PC-3 (cell line): ENCODE measurements at regions of chr17 and their contacts with region 1.

Region 1: DNA sequence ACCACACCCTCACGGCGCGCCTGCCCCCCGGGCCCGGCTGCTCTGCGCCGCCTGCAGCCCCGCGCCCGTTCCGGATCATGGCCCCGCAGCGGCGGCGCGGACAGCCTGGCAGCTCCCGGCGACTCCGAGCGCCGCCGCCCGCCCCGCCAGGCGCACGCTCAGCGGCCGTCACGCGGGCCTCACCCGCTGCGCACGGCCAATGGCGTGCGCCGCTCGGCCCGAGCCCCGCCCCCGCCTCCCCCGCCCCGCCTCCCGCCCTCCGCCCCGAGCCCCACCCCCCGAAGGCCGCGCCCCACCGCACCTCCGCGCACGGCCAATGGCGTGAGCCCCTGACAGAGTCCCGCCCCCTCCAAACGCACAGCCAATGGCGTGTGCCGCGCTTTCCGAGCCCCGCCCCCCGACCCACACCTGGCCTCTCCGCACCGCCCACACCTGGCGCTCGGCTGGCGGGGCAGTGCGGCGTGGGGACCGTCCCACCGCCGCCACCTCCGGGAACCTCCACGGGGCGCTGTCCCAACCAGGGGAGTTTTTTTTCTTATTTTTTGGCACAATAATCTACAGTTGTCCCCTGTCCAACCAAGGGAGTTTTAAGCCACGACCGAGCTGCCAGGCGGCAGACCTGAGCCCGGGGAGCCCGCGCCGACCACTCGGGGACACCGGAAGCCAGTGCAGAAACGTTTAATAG is at the start of gene PCYT2:
- DNase-seq: peak; percentile 90
- ATAC-seq: peak; percentile 75
- H3K4me3 ChIP-seq: peak within 1 kb of the TSS; percentile 85
- H3K27ac ChIP-seq: peak within 1 kb of the TSS; percentile 45; the same call in 1 of the 2 replicates
- H3K4me1 ChIP-seq: peaks cover 36% of the 10 kb centered on the region
- H3K27me3 ChIP-seq: no peaks in the 10 kb centered on the region
- CTCF ChIP-seq: peak; percentile 34; the same call in 1 of the 2 replicates
- total RNA-seq, gene PCYT2: 33.3 and 42.7 TPM in 2 replicates

Region 2: DNA sequence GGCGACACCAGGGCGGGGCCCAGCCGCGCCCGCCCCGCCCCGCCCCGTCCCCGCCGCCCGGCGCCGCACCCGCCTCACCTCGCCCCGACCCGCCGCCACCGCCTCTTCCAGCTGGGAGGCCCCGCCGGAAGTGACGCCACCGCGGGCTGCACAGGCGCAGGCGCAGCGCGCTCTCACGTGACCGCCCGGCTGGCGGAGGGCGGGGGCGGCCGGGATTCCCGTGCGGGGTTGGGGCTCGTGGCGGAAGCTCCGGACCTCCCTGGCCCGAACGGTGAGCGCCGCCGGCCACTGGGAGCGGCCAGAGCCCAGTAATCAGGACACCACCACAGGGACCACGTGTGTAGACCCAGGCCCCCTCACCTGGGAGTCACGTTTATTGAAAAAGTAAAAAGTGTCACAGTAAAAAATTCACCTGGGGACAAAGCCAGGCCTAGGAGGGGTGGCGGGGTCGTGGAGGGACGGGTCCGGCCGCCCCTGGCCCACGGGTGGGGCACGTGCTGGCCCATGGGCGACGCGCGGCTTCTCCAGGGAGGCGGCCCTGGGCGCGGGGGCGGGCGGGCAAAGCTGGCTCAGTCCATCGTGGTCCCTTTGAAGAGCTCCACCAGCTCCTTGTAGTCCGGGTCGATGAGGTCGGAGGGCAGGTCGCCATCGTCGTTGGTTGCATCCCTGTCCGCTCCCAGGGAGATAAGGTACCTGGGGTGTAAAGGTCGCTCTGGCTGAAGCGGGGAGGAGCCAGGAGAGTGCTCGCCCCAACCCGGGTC is 78.1 kb before region 1 on chr17 and contains the start of gene MCRIP1:
- CTCF ChIA-PET with region 1: no interaction called
- POLR2A ChIA-PET with region 1: no interaction called
- intact Hi-C with region 1: no loop called
- DNase-seq: peak; percentile 96
- ATAC-seq: peak; percentile 79
- H3K4me3 ChIP-seq: peak within 1 kb of the TSS; percentile 83
- H3K27ac ChIP-seq: peak within 1 kb of the TSS; percentile 81
- H3K4me1 ChIP-seq: peaks cover 21% of the 10 kb centered on the region
- H3K27me3 ChIP-seq: no peaks in the 10 kb centered on the region
- CTCF ChIP-seq: no peak
- total RNA-seq, gene MCRIP1: 73.4 and 90.9 TPM in 2 replicates

Region 3: GRCh38 chr17:81890447-81891299 is 20.7 kb before region 1 on chr17:
- CTCF ChIA-PET with region 1: no interaction called
- POLR2A ChIA-PET with region 1: interaction called, 4 read pairs
- intact Hi-C with region 1: loop called (anchors 1 kb)
- DNase-seq: no peak
- ATAC-seq: no peak
- H3K4me3 ChIP-seq: peak overlapping the region; percentile 99
- H3K27ac ChIP-seq: peak overlapping the region; percentile 58
- H3K4me1 ChIP-seq: peaks cover 40% of the 10 kb centered on the region
- H3K27me3 ChIP-seq: no peaks in the 10 kb centered on the region
- CTCF ChIP-seq: no peak

Region 4: DNA sequence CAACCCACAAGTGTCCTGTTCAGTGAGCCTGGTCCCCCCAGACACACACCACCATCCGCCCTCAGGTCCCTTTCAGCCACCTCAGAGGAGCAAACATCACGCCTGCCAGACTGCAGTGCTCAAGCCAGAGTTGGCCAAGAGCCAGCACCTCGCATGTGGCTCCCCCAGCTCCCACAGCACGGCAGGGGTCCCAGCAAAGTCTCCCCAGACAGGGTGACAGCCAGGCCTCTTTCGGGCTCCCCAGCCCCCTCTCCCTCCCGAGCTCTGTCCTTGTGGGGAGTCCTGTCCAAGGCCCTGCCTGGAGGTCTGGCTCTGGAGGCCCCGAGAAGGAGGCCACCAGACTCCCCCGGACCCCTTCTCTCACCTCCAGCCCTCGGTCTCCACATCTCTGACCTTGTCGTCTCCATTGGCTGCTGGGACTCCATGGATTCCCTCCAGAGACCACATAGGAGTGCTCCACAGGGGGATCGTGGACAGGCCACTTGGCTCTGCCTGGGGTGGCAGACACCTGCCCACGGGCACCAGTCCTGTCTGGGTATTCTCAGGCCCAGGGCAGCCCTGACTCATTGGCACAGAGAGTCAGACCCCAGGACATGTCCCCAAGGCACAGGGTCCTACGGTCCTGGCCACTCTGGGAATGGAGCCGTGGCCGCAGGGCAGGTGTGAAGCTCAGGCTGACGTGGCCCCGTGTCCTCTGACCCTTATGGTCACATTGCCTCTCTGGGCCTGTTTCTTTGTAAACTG is 37.4 kb after region 1 on chr17:
- CTCF ChIA-PET with region 1: no interaction called
- POLR2A ChIA-PET with region 1: no interaction called
- intact Hi-C with region 1: no loop called
- DNase-seq: no peak
- ATAC-seq: no peak
- H3K4me3 ChIP-seq: no peak overlapping the region
- H3K27ac ChIP-seq: no peak overlapping the region
- H3K4me1 ChIP-seq: no peaks in the 10 kb centered on the region
- H3K27me3 ChIP-seq: no peaks in the 10 kb centered on the region
- CTCF ChIP-seq: no peak

Region 5: GRCh38 chr17:81973432-81973831 is 62.0 kb after region 1 on chr17:
- CTCF ChIA-PET with region 1: no interaction called
- POLR2A ChIA-PET with region 1: interaction called, 11 read pairs
- intact Hi-C with region 1: no loop called
- DNase-seq: no peak
- ATAC-seq: no peak
- H3K4me3 ChIP-seq: no peak overlapping the region
- H3K27ac ChIP-seq: no peak overlapping the region
- H3K4me1 ChIP-seq: peaks cover 10% of the 10 kb centered on the region
- H3K27me3 ChIP-seq: no peaks in the 10 kb centered on the region
- CTCF ChIP-seq: no peak